ENCODE measurements at regions of chr10 and their contacts with region 1.

Region 1: DNA sequence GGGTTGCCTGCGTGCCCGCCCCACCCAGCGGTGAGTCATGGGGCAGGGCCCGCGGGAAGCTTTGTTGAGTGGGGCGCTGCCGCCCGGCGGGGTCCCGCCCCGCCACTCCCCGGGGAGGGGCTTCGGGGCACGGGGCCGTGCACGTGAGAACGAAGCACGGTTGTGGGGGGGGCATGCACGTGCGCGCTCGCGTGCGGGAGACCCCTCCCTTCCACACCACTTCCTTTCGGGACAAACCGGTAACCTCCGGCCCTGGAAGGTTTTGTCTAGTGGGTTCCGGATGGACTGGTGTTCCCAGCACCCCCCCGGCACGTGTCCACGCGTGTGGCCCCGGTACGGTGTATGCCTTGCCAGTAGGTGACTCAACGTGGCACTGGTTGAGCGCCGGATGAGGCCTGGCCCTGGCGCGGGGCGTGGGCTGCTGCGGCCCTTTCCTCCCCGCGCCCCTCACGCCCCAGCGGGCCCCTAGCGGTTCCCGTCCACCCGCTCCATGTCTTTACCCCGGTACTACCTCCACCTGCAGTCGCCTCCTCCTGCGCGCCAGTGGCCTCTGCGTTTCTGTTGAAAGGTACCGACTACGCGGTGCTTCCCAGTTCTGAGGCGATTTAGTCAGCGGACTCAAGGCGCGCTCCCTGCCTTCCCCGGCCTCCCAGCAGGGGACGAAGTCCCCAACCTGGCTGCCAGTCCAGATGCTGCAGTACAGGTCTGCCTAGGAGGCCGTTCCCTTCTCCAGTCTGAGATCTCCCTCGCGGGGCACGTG is 3.1 kb downstream of the ADIRF start:
- DNase-seq: peak; percentile 84 to 96 (median 90)
- ATAC-seq: peak; percentile 85
- H3K4me3 ChIP-seq: peak overlapping the region; percentile 86
- H3K4me3 Mint-ChIP-seq: peak overlapping the region; percentile 79
- H3K27ac ChIP-seq: peak overlapping the region; percentile 81 to 93
- H3K27ac Mint-ChIP-seq: peak overlapping the region; percentile 93
- H3K4me1 ChIP-seq: peaks cover 57% of the 10 kb centered on the region
- H3K4me1 Mint-ChIP-seq: peaks cover 32% of the 10 kb centered on the region
- H3K27me3 ChIP-seq: no peaks in the 10 kb centered on the region
- H3K27me3 Mint-ChIP-seq: no peaks in the 10 kb centered on the region
- CTCF ChIP-seq: no peak

Region 2: GRCh38 chr10:86046845-86047460 is 924.5 kb before region 1 on chr10:
- CTCF ChIA-PET with region 1: no interaction called
- POLR2A ChIA-PET with region 1: no interaction called
- intact Hi-C with region 1: no loop called
- DNase-seq: no peak
- ATAC-seq: peak; percentile 64
- H3K4me3 ChIP-seq: no peak overlapping the region
- H3K4me3 Mint-ChIP-seq: no peak overlapping the region
- H3K27ac ChIP-seq: no peak overlapping the region
- H3K27ac Mint-ChIP-seq: no peak overlapping the region
- H3K4me1 ChIP-seq: peaks cover 20% of the 10 kb centered on the region
- H3K4me1 Mint-ChIP-seq: peaks cover 15% of the 10 kb centered on the region
- H3K27me3 ChIP-seq: no peaks in the 10 kb centered on the region
- H3K27me3 Mint-ChIP-seq: no peaks in the 10 kb centered on the region
- CTCF ChIP-seq: no peak

Region 3: DNA sequence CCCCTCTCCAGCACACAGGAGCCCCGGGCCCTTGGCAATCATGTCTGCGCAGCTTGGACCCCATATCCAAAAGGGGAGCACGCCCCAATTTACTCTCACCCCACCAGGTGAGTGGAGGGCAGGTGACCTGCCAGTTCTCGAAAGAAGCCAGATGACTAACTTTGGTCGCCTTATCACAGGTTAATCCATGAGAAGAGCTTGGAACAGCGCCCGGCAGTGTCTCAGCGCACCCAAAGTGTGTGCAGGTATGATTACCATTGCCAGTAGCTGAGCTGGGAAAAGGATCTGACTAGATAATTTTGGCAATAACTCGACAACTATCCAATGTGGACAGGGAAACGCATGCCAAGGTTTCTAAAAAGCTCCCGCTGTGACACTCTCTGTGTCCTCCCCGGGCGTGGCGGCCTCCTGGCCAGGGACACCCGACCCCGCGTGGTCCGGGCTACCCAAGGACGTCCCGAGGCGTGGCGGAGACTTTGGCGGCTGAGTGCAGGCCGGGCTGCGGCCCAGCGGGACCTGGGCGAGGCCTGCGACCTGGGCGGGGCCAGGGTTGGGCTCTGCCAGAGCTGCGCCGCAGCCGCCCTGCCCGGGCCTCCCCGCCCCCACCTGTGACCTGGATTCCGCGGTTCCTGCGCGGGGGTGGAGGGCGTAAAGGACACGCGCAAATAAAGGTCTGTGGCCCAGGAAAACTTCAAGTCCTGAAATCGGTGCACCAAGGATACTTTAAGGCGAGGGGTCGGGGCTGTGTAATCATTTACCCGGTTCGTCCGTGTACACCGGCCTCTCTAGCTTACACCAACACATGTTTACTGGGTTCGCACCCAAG is 436.1 kb before region 1 on chr10:
- CTCF ChIA-PET with region 1: no interaction called
- POLR2A ChIA-PET with region 1: no interaction called
- intact Hi-C with region 1: loop called in 1 of 2 experiments (anchors 10 kb)
- DNase-seq: peak in 10 of 14 experiments; percentile 4 to 60 (median 38)
- ATAC-seq: peak; percentile 16
- H3K4me3 ChIP-seq: peak overlapping the region; percentile 53
- H3K4me3 Mint-ChIP-seq: peak overlapping the region; percentile 75
- H3K27ac ChIP-seq: no peak overlapping the region
- H3K27ac Mint-ChIP-seq: peak overlapping the region; percentile 91
- H3K4me1 ChIP-seq: peaks cover 29% of the 10 kb centered on the region
- H3K4me1 Mint-ChIP-seq: peaks cover 30% of the 10 kb centered on the region
- H3K27me3 ChIP-seq: no peaks in the 10 kb centered on the region
- H3K27me3 Mint-ChIP-seq: no peaks in the 10 kb centered on the region
- CTCF ChIP-seq: no peak

Region 4: DNA sequence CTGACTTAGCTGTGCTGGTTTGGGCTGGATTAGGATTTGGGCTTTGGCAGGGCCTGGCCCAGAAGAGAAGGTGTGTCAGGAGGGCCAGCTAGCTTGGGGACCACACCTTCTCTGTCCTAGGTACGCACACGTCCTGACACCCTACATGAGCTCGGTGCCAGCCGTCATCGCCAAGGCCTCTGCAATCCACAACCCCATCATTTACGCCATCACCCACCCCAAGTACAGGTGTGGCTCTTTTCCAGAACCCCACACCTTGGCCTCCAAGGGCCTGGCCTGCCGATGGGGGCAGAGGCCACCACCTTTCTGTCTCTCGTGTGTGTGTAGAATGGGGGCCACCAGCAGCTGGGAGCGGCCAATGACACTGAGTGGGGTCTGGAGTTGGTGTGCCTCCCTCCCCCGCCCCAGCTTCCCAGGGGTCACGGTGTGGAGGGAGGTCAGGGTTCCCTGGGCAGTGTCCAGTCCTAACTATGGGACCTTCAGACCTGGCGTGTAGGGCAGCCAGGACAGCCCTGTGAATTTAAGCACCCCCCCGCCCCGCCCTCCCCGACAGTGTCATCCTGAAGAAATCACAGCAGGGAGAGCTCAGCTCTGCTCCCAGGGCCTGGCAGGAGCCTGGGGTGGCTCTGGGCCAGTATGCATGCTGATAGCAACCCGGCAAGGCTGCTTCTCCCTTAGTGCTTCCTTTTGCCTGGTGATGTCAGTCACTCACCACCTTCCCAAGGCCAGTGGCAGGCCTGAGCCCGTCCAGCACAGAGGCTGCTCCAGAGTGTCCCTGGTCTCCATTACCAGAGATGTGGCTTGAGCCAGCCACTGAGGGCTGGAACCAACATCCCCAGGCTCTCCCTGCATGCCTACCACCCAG is 310.0 kb before region 1 on chr10:
- CTCF ChIA-PET with region 1: no interaction called
- POLR2A ChIA-PET with region 1: no interaction called
- intact Hi-C with region 1: no loop called
- DNase-seq: no peak
- ATAC-seq: no peak
- H3K4me3 ChIP-seq: no peak overlapping the region
- H3K4me3 Mint-ChIP-seq: no peak overlapping the region
- H3K27ac ChIP-seq: no peak overlapping the region
- H3K27ac Mint-ChIP-seq: no peak overlapping the region
- H3K4me1 ChIP-seq: no peaks in the 10 kb centered on the region
- H3K4me1 Mint-ChIP-seq: no peaks in the 10 kb centered on the region
- H3K27me3 ChIP-seq: no peaks in the 10 kb centered on the region
- H3K27me3 Mint-ChIP-seq: no peaks in the 10 kb centered on the region
- CTCF ChIP-seq: no peak

Region 5: GRCh38 chr10:86710987-86711512 is 260.4 kb before region 1 on chr10:
- CTCF ChIA-PET with region 1: no interaction called
- POLR2A ChIA-PET with region 1: interaction called, 5 read pairs
- intact Hi-C with region 1: loop called in 1 of 2 experiments (anchors 5 kb)
- DNase-seq: peak; percentile 68 to 93 (median 82)
- ATAC-seq: peak; percentile 95
- H3K4me3 ChIP-seq: peak overlapping the region; percentile 67
- H3K4me3 Mint-ChIP-seq: peak overlapping the region; percentile 95
- H3K27ac ChIP-seq: peak overlapping the region; percentile 78 to 81
- H3K27ac Mint-ChIP-seq: peak overlapping the region; percentile 95
- H3K4me1 ChIP-seq: peaks cover 17% of the 10 kb centered on the region
- H3K4me1 Mint-ChIP-seq: peaks cover 20% of the 10 kb centered on the region
- H3K27me3 ChIP-seq: no peaks in the 10 kb centered on the region
- H3K27me3 Mint-ChIP-seq: no peaks in the 10 kb centered on the region
- CTCF ChIP-seq: peak; percentile 77

Region 6: GRCh38 chr10:86755740-86756510 is 215.5 kb before region 1 on chr10:
- CTCF ChIA-PET with region 1: no interaction called
- POLR2A ChIA-PET with region 1: no interaction called
- intact Hi-C with region 1: loop called in 1 of 2 experiments (anchors 5 kb)
- DNase-seq: peak; percentile 67 to 92 (median 85)
- ATAC-seq: peak; percentile 92
- H3K4me3 ChIP-seq: peak overlapping the region; percentile 62
- H3K4me3 Mint-ChIP-seq: peak overlapping the region; percentile 91
- H3K27ac ChIP-seq: no peak overlapping the region
- H3K27ac Mint-ChIP-seq: peak overlapping the region; percentile 56
- H3K4me1 ChIP-seq: peaks cover 13% of the 10 kb centered on the region
- H3K4me1 Mint-ChIP-seq: peaks cover 32% of the 10 kb centered on the region
- H3K27me3 ChIP-seq: peaks cover 0 to 6% of the 10 kb centered on the region in 2 experiments
- H3K27me3 Mint-ChIP-seq: peaks cover 31% of the 10 kb centered on the region
- CTCF ChIP-seq: no peak

Region 7: GRCh38 chr10:87079106-87079836 is 107.9 kb after region 1 on chr10:
- CTCF ChIA-PET with region 1: no interaction called
- POLR2A ChIA-PET with region 1: no interaction called
- intact Hi-C with region 1: loop called in 1 of 2 experiments (anchors 1 kb)
- DNase-seq: no peak
- ATAC-seq: no peak
- H3K4me3 ChIP-seq: no peak overlapping the region
- H3K4me3 Mint-ChIP-seq: no peak overlapping the region
- H3K27ac ChIP-seq: no peak overlapping the region
- H3K27ac Mint-ChIP-seq: no peak overlapping the region
- H3K4me1 ChIP-seq: peaks cover 10% of the 10 kb centered on the region
- H3K4me1 Mint-ChIP-seq: peaks cover 26% of the 10 kb centered on the region
- H3K27me3 ChIP-seq: no peaks in the 10 kb centered on the region
- H3K27me3 Mint-ChIP-seq: no peaks in the 10 kb centered on the region
- CTCF ChIP-seq: no peak

Region 8: DNA sequence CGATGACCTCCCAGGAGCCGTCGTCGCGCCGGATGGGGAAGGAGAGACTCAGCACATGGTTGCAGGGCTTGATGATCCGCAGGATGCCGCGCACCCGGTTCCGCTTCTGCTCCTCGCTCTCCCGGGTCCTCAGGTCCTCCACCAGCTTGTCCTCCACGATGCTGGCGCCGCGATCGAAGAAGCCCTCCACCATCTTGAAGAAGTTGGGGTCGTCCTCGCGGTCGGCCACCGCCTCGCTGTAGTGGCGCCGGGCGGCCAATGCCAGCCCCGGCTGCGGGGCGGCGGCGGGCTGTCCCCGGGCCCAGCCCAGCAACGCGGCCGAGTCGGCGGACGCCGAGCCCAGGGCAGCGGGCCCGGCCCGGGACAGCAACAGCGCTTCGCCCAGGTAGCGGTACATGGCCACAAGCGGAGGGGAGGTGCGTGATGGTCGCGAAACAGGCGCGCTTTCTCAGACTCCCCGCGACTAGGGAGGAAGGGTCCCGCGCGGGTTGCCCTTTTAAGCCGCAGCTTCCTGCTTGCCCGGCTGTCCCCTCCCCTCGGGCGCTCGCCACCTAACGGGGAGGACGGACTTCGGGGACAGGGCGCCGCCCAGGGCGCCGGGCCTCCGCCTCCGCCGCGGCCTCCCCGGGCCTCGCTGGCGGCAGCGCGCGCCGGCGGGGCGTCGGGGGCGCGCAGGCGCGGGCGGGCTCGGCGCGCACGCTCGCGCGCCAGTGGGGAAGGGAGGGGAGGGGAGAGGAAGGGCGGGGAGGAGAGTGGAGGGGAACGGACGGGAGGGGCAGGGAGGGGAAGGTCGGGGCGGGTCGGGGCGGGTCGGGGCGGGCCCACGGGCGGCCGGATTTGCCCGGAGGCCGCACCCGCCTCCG is 123.2 kb after region 1 on chr10 and contains the starts of genes GLUD1 and SHLD2:
- CTCF ChIA-PET with region 1: interaction called, 5 read pairs
- POLR2A ChIA-PET with region 1: interaction called, 32 read pairs
- intact Hi-C with region 1: loop called in 1 of 2 experiments (anchors 1 kb)
- DNase-seq: peak; percentile 75 to 95 (median 84)
- ATAC-seq: peak; percentile 57
- H3K4me3 ChIP-seq: peak within 1 kb of the TSS; percentile 78
- H3K4me3 Mint-ChIP-seq: peak within 1 kb of the TSS; percentile 96
- H3K27ac ChIP-seq: peak within 1 kb of the TSS; percentile 69 to 93
- H3K27ac Mint-ChIP-seq: peak within 1 kb of the TSS; percentile 94
- H3K4me1 ChIP-seq: peaks cover 24% of the 10 kb centered on the region
- H3K4me1 Mint-ChIP-seq: peaks cover 61% of the 10 kb centered on the region
- H3K27me3 ChIP-seq: no peaks in the 10 kb centered on the region
- H3K27me3 Mint-ChIP-seq: no peaks in the 10 kb centered on the region
- CTCF ChIP-seq: no peak
- total RNA-seq, gene GLUD1: 81.0 to 82.4 TPM
- total RNA-seq, gene SHLD2: 20.6 to 23.0 TPM